ENCODE measurements at regions of chr6 and their contacts with region 1.

Region 1: GRCh38 chr6:30942338-30943060 is 1.7 kb downstream of the MUCL3 start:
- DNase-seq: peak; percentile 99
- H3K4me3 Mint-ChIP-seq: peak overlapping the region; percentile 29
- H3K27ac Mint-ChIP-seq: peak overlapping the region; percentile 45
- H3K4me1 Mint-ChIP-seq: peaks cover 38% of the 10 kb centered on the region
- H3K27me3 Mint-ChIP-seq: peaks cover 10% of the 10 kb centered on the region
- CTCF ChIP-seq: peak; percentile 77

Region 2: DNA sequence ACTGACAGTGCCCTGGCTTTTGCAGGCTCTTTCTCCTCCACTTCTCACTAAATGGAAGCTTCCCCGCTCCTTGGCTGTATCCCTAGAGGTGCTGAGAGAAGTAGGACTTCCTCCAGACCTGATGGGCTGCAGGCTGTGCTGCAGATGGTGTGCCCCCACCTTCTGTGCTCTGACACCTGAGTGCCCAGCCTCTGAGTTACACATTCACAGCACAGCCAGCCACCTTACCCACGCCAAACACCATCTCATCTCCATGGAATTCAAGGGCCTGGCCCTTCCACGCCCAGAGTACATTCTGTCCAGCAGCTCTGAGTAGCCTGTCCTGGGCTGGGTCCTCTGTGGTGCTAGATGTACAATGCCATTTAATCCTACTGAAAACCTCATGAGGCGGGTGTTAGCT is 15.9 kb before region 1 on chr6:
- CTCF ChIA-PET with region 1: interaction called, 14 read pairs
- intact Hi-C with region 1: no loop called
- DNase-seq: peak; percentile 74
- H3K4me3 Mint-ChIP-seq: peak overlapping the region; percentile 23
- H3K27ac Mint-ChIP-seq: peak overlapping the region; percentile 81
- H3K4me1 Mint-ChIP-seq: peaks cover 39% of the 10 kb centered on the region
- H3K27me3 Mint-ChIP-seq: no peaks in the 10 kb centered on the region
- CTCF ChIP-seq: no peak

Region 3: GRCh38 chr6:31007694-31008093 is 65.2 kb after region 1 on chr6:
- CTCF ChIA-PET with region 1: interaction called, 11 read pairs
- intact Hi-C with region 1: loop called (anchors 10 kb)
- DNase-seq: peak; percentile 72
- H3K4me3 Mint-ChIP-seq: peak overlapping the region; percentile 27
- H3K27ac Mint-ChIP-seq: peak overlapping the region; percentile 85
- H3K4me1 Mint-ChIP-seq: peaks cover 70% of the 10 kb centered on the region
- H3K27me3 Mint-ChIP-seq: no peaks in the 10 kb centered on the region
- CTCF ChIP-seq: no peak

Region 4: GRCh38 chr6:31042806-31043205 is 100.3 kb after region 1 on chr6:
- CTCF ChIA-PET with region 1: interaction called, 15 read pairs
- intact Hi-C with region 1: loop called (anchors 2 kb)
- DNase-seq: peak; percentile 82
- H3K4me3 Mint-ChIP-seq: no peak overlapping the region
- H3K27ac Mint-ChIP-seq: peak overlapping the region; percentile 14
- H3K4me1 Mint-ChIP-seq: peaks cover 31% of the 10 kb centered on the region
- H3K27me3 Mint-ChIP-seq: peaks cover 12% of the 10 kb centered on the region
- CTCF ChIP-seq: peak; percentile 85

Region 5: DNA sequence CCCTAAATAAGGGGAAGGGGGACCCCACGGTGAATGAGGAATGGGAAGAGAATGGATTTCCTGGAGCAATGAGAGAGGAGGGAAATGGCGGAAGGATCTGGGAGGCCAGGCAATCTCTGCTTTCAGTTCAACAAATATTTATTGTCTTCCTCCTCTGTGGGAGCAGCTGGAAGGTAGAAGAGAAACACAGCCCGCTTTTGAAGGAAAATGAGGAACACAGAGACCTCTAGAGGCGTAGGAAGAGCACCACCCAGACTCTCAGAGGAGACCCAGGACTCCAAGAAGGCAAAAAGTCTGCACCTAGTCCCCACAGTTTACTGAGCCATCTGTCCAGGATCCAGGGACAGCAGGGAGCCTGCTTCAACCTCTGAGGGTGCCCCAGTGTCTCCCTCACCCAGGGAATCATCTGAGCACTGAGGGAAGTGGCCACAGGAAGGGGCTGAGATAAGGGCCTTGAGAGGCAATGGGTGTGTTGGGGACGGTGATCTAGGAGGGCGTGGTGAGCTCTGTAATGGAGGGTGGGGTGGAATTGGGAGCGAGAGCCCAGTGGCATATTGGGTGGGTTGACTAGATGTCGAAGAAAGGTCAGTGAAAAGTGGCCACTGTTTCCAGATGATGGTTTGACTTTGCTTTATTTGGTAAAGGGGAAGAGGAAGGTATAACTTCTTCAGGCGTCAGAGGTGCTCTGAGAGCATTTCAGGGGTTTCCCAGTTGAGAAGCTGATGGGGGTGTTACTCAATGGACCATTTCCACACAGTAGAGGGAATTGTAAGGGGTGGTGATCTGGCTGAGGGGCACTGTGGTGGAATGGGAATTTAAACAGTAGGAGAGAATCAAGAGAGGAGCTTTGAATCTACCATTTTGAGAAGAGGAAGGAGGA is 172.7 kb after region 1 on chr6:
- CTCF ChIA-PET with region 1: interaction called, 12 read pairs
- intact Hi-C with region 1: no loop called
- DNase-seq: peak; percentile 73
- H3K4me3 Mint-ChIP-seq: peak overlapping the region; percentile 58
- H3K27ac Mint-ChIP-seq: peak overlapping the region; percentile 87
- H3K4me1 Mint-ChIP-seq: peaks cover 44% of the 10 kb centered on the region
- H3K27me3 Mint-ChIP-seq: peaks cover 6% of the 10 kb centered on the region
- CTCF ChIP-seq: peak; percentile 47

Measured in Calu3 (cell line).